Activated naive CD4-positive, alpha-beta T cell treated with anti-CD3 and anti-CD28 coated beads, Interleukin-2, amount 10 ng/mL, durations not matched to agents 7 days and 5 days (primary cell): ENCODE measurements at regions of chr21 and their contacts with region 1.

Region 1: DNA sequence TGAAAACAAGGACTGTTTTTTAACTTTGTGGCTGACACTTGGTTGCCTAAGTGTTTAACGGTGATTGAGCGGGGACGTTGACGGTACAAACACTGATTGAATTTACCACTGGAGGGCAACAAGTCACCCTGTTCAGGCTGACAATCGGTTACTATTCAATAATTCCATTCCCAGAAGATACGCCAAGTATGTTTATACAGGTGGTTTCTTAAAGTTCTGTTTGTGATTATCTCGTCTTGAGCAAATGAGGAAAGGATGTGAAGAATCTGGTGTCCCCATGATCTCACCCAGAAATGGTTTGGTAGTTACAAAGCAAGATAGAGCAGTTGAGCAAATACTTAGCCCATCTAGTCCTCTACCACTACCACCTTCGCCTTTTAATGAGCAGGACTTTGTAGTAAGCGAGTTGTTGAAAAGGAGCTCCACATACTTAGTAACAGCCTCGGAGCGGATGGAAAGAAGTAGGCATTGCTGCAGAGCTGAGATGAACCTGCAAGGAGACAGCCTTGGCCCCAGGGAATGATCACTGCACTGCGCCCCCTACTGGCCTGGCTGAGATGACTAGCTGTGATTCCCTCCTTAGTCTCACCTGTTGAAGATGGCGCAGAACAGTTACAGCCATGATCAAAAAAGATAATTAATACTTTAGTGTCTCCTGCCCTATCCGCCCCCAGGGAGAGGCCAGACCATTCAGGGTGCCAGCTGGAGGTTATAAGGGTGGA is 36.3 kb downstream of the IFNAR1 start:
- DNase-seq: peak; percentile 91
- H3K4me3 Mint-ChIP-seq: peak overlapping the region; percentile 71
- H3K27ac Mint-ChIP-seq: peak overlapping the region; percentile 93
- H3K4me1 Mint-ChIP-seq: peaks cover 26% of the 10 kb centered on the region
- H3K27me3 Mint-ChIP-seq: no peaks in the 10 kb centered on the region

Region 2: DNA sequence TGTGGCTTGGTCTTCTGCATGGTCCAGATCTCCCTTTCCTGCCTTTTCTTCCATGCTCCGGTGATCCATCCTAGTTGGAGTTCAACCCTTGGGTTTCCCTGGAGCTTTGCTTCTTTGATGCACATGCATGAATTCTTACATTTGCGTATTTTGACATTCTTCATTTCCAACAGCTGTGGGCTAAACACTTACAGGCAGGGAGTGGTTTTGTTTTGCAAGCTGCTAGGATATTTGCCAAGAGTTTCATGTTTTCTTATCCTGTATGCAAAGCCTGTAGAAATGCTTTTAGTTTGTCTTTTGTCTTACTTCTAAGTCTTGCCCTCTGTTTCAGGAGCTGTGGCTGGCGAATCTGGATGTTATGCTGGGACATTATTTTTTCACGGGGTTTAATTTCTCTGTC is 499.2 kb before region 1 on chr21:
- CTCF ChIA-PET with region 1: no interaction called
- DNase-seq: no peak
- H3K4me3 Mint-ChIP-seq: no peak overlapping the region
- H3K27ac Mint-ChIP-seq: no peak overlapping the region
- H3K4me1 Mint-ChIP-seq: no peaks in the 10 kb centered on the region
- H3K27me3 Mint-ChIP-seq: peaks cover 4% of the 10 kb centered on the region

Region 3: DNA sequence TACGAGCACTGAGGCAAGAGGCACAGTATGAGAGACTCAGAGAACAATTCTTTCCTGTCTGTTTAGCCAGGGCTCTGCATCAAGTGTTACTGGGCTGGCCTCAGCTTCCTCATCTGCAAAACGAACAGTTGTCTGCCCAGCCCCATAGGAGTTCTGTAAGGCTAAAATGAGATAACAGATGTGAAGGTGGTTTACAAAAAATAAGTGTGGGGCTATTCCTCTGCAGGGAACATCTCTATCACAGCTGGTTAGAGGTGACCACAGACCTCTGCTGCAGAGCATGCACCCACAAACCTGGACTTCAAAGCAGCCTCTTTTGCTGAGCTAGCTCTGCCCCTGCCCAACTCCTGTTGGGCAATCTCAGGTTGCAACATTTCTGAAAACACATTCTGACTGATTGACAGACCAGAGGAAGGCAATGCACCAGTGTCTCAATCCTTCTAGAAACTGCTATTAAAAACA is 301.6 kb before region 1 on chr21:
- CTCF ChIA-PET with region 1: no interaction called
- DNase-seq: no peak
- H3K4me3 Mint-ChIP-seq: no peak overlapping the region
- H3K27ac Mint-ChIP-seq: no peak overlapping the region
- H3K4me1 Mint-ChIP-seq: no peaks in the 10 kb centered on the region
- H3K27me3 Mint-ChIP-seq: peaks cover 62% of the 10 kb centered on the region

Region 4: GRCh38 chr21:33324291-33325221 is 36.5 kb before region 1 on chr21 and contains the start of gene IFNAR1:
- CTCF ChIA-PET with region 1: interaction called, 27 read pairs
- DNase-seq: peak; percentile 99
- H3K4me3 Mint-ChIP-seq: no peak within 1 kb of the TSS
- H3K27ac Mint-ChIP-seq: no peak within 1 kb of the TSS
- H3K4me1 Mint-ChIP-seq: peaks cover 28% of the 10 kb centered on the region
- H3K27me3 Mint-ChIP-seq: peaks cover 5% of the 10 kb centered on the region

Region 5: DNA sequence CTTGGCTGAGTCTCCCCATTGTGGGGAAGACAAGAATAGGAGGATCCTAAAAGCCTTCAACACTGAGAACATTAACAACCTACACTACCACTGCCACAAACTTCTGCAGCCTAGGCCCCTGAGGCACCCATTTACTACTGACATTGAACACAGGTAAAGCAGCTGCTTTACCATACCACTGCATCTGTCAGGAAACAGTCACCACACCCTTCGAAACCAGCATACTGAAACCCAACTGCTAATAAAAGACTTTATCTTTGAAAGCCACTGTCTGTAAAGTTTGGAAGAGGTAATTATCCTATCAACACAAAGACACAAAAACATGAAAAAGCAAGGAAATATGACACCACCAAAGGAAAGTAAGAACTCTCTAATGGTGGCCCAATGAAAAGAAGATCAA is 28.9 kb before region 1 on chr21:
- CTCF ChIA-PET with region 1: interaction called, 27 read pairs
- DNase-seq: peak; percentile 61
- H3K4me3 Mint-ChIP-seq: peak overlapping the region; percentile 40
- H3K27ac Mint-ChIP-seq: peak overlapping the region; percentile 86
- H3K4me1 Mint-ChIP-seq: peaks cover 63% of the 10 kb centered on the region
- H3K27me3 Mint-ChIP-seq: no peaks in the 10 kb centered on the region

Region 6: GRCh38 chr21:33348706-33349105 is 12.3 kb before region 1 on chr21:
- CTCF ChIA-PET with region 1: interaction called, 35 read pairs
- DNase-seq: no peak
- H3K4me3 Mint-ChIP-seq: no peak overlapping the region
- H3K27ac Mint-ChIP-seq: no peak overlapping the region
- H3K4me1 Mint-ChIP-seq: peaks cover 5% of the 10 kb centered on the region
- H3K27me3 Mint-ChIP-seq: no peaks in the 10 kb centered on the region

Region 7: DNA sequence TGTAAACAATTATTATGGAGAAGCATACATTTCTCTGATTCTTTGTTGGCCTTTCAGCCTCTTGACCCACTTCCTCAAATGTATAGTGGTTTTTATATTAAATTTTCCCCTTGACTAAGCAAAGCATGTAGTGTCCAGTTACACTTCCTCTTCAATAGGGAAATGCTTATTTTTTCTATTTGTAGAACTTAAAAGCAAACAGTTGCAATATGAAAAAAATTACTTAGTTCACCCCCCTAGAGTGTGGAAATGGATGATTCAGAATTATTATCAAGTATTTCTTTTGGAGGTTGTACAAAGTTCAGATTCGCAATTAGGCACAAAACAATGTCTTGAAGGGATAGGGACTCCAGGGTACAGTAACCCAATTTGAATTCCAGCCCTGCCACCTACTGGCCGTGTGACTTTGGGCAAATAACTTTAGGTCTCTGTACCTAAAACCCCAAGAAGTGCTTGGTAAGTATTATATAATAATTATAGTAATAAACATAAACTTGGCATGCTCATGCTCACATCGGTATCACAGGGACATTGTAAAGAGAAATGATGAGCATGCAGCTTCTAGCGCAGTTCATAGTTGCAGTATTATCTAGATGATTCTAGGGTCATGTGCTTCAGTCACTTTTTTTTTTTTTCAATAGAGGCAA is 13.5 kb after region 1 on chr21:
- CTCF ChIA-PET with region 1: interaction called, 10 read pairs
- DNase-seq: peak; percentile 78
- H3K4me3 Mint-ChIP-seq: no peak overlapping the region
- H3K27ac Mint-ChIP-seq: no peak overlapping the region
- H3K4me1 Mint-ChIP-seq: peaks cover 19% of the 10 kb centered on the region
- H3K27me3 Mint-ChIP-seq: peaks cover 61% of the 10 kb centered on the region

Region 8: DNA sequence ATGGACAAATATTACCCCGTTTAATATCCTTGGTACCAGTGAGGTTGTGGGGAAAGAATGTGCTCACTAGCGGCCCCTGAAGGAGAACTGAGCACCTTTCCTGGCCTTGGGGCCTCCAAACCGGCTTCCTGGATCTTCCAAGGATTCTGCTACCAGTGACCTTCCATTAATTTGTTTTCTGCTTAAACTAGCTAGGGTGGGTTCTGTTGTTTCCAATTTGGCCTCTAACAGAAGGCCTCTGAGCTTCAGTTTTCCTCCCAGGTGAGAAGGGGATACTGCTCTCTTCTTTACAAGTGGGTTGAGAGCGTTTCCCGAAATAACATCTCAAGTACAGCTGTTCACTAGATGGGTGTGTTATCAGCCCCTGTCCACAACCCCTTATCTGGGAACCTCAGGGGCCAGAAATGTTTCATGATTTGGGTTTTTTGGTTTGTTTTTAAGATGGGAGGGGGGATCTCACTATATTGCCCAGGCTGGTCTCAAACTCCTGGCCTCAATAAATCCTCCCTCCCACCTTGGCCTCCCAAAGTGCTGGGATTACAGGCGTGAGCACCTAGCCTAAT is 25.3 kb after region 1 on chr21:
- CTCF ChIA-PET with region 1: interaction called, 10 read pairs
- DNase-seq: no peak
- H3K4me3 Mint-ChIP-seq: no peak overlapping the region
- H3K27ac Mint-ChIP-seq: no peak overlapping the region
- H3K4me1 Mint-ChIP-seq: peaks cover 51% of the 10 kb centered on the region
- H3K27me3 Mint-ChIP-seq: peaks cover 80% of the 10 kb centered on the region

Region 9: GRCh38 chr21:33444499-33444898 is 83.5 kb after region 1 on chr21:
- CTCF ChIA-PET with region 1: interaction called, 20 read pairs
- DNase-seq: no peak
- H3K4me3 Mint-ChIP-seq: no peak overlapping the region
- H3K27ac Mint-ChIP-seq: no peak overlapping the region
- H3K4me1 Mint-ChIP-seq: peaks cover 8% of the 10 kb centered on the region
- H3K27me3 Mint-ChIP-seq: no peaks in the 10 kb centered on the region